PC-3 (cell line): ENCODE measurements at regions of chr13 and their contacts with region 1.

Region 1: DNA sequence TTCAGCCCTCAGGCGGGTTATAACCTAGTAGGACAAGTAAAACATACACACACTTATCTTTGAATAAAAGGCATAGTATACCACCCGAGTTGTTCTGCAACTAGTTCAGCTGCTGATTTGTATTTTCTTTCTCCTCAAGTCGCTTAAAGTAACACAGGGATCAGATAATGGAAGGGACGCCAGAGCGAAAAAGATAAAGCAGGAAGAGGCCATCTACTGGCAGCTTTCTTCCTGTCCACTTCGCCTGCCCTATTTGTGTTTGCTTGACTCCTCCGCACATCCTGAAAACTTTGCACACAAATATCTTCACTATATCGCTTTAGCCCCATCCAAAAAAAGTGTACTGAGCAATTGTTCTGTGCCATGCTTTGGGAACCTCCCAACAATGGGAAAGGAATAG is 238.0 kb upstream of the SOX21 start:
- DNase-seq: no peak
- ATAC-seq: peak; percentile 55; the same call in 1 of the 2 replicates
- H3K4me3 ChIP-seq: no peak overlapping the region
- H3K27ac ChIP-seq: no peak overlapping the region
- H3K4me1 ChIP-seq: no peaks in the 10 kb centered on the region
- H3K27me3 ChIP-seq: no peaks in the 10 kb centered on the region
- CTCF ChIP-seq: peak; percentile 33; the same call in 1 of the 2 replicates

Region 2: DNA sequence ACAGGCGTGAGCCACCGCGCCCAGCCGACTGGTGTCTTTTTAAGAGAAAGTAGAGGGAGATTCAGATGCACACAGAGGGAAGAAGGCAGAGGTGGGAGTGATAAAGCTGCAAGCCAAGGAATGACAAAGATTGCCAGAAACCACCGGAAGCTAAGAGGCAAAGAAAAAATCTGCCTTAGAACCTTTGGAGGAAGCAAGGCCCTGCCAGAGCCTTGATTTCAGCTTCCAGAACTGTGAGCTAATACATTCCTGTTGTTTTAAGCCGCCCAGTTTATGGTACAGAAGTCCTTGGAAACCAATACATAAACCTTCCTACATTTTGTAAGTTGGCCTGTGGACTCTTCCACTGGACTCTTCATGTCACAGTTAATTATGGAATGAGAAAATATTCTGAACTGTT is 166.2 kb before region 1 on chr13:
- CTCF ChIA-PET with region 1: no interaction called
- POLR2A ChIA-PET with region 1: no interaction called
- intact Hi-C with region 1: loop called (anchors 10 kb)
- DNase-seq: no peak
- ATAC-seq: no peak
- H3K4me3 ChIP-seq: no peak overlapping the region
- H3K27ac ChIP-seq: no peak overlapping the region
- H3K4me1 ChIP-seq: peaks cover 26% of the 10 kb centered on the region
- H3K27me3 ChIP-seq: no peaks in the 10 kb centered on the region
- CTCF ChIP-seq: no peak

Region 3: DNA sequence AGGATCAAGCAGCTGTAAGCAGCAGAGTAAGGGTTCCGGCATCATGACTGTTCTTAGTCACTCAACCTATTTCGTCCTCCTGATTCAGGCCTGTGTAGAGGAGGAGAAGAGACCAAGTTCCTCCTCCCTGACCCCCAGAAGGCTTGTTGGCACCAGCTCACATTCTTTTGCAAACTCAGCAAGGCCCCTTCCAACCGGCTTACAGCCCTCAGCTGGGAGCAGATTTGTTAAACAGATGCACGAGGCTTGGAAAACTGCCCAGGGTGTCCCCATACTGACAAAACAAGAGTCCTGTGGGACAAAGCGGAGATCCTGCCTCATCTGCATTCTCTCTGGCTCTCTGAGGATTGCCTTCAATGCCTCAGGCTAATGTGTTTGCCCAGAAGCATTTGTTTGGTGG is 124.8 kb before region 1 on chr13:
- CTCF ChIA-PET with region 1: no interaction called
- POLR2A ChIA-PET with region 1: no interaction called
- intact Hi-C with region 1: no loop called
- DNase-seq: no peak
- ATAC-seq: no peak
- H3K4me3 ChIP-seq: no peak overlapping the region
- H3K27ac ChIP-seq: no peak overlapping the region
- H3K4me1 ChIP-seq: no peaks in the 10 kb centered on the region
- H3K27me3 ChIP-seq: no peaks in the 10 kb centered on the region
- CTCF ChIP-seq: no peak